ENCODE measurements at regions of chr2 and their contacts with region 1.

Region 1: DNA sequence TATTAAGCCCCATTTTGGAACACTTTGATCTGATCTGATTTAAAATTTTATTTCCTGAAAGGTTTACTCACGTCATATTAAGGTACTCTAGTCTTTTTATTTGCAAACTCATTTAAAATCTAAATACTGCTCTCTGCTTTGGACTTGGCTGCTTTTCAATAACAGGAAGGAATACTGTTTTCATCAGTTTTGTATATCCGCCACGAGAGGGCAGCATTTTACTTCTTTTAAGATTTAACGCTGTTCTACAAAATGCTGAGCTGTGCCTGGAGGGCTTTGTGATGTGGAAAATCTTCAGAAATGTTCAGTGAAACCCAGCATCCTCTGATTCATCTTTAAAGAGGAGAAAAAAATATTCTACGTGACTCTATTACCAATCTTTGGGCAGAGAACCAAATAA is 37.5 kb upstream of the SLC38A11 start:
- DNase-seq: peak; percentile 58
- H3K4me3 Mint-ChIP-seq: no peak overlapping the region
- H3K27ac Mint-ChIP-seq: no peak overlapping the region
- H3K4me1 Mint-ChIP-seq: peaks cover 42% of the 10 kb centered on the region
- H3K27me3 Mint-ChIP-seq: peaks cover 3% of the 10 kb centered on the region

Region 2: DNA sequence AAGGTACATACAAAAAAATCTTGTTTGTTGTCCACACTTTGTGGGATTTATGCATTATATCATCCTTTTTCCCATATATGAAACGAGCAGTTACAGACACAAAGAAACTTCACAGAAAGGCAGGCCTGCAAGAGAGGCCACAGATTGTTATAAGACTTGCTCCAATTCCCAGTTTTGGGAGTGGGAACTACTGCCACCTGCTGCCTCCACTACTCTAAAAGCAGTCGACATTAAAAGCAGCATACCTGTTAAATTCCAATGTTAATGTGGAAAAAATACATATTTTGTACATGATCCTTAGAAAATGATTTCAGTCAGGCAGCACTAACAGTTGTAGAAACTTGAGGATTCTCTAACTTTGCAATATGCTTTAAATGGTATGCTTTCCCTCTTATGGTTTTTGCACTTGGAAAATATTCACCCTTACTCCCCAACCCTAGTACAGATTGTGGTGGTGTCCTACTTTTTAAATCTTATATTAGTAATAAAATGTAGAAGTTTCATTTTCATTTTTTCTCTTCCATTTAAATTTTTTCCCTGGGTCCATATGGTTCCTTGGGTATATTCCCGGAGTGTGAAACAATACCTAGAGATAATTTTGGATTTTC is 75.4 kb before region 1 on chr2:
- CTCF ChIA-PET with region 1: no interaction called
- DNase-seq: no peak
- H3K4me3 Mint-ChIP-seq: no peak overlapping the region
- H3K27ac Mint-ChIP-seq: no peak overlapping the region
- H3K4me1 Mint-ChIP-seq: no peaks in the 10 kb centered on the region
- H3K27me3 Mint-ChIP-seq: no peaks in the 10 kb centered on the region

Region 3: DNA sequence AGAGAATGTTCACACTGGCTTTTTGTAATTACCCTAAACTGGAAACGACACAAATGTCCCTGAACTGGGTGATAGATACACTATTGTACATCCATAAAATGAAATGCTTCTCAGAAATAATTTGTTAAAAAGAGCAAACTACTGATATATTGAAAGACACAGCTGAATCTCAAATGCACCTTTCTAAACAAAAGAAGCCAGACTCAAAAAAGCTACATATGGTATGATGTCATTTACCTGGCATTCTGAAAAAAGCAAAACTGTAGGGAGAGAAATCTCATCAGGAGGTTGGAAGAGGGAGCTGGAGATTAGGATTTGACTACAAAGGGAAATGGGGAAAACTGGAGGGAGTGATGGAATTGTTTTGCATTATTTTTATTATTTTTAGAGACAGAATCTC is 49.5 kb before region 1 on chr2:
- CTCF ChIA-PET with region 1: no interaction called
- DNase-seq: no peak
- H3K4me3 Mint-ChIP-seq: no peak overlapping the region
- H3K27ac Mint-ChIP-seq: no peak overlapping the region
- H3K4me1 Mint-ChIP-seq: no peaks in the 10 kb centered on the region
- H3K27me3 Mint-ChIP-seq: no peaks in the 10 kb centered on the region

Region 4: DNA sequence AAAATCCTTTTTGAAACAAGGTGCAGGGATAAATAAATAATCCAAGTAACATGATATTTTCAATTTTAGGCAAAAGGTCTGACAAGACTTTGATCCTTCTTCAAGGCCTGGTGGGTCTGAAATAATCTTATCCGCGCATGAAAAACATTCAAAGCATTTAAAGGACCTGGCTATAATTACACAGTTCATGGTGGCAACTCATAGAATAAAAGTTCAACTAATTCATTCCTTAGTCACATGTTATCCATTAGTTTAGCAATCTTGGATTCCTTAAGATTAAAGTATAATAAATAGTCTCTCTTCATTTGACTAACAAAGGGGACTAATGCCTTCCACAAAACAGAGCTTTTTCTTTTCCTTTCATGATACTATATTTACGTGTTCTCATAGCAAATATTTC is 16.5 kb before region 1 on chr2:
- CTCF ChIA-PET with region 1: no interaction called
- DNase-seq: no peak
- H3K4me3 Mint-ChIP-seq: no peak overlapping the region
- H3K27ac Mint-ChIP-seq: no peak overlapping the region
- H3K4me1 Mint-ChIP-seq: no peaks in the 10 kb centered on the region
- H3K27me3 Mint-ChIP-seq: no peaks in the 10 kb centered on the region

Region 5: DNA sequence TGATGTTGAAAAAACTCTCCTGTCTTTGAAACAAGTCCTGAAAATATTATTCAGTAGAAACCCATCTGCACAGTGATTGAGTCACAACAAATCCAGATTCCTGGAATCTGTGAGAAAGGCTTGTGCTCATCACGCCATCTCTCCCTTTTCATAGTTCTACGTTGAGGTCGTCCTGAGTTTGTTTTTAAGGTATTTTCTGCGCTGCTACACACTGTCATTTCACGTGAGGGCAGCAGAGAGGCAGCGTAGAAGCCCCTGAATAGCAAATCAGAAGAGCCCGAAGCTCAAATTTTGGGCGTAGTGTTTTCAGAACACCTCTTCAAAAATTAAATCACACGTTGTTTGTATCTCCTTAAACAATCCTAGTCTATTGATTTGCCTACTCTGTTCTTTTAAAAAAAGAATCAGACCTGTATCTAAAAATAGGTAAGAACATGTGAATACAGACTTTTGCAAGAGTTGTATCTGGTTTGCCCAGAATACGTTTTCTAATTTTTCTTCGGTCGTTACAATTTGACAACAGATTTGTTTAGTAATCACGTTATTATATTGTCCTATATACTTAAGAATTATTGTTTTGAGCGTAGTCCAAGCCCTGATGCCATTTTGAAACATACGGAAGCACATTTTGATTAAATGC is 24.1 kb after region 1 on chr2:
- CTCF ChIA-PET with region 1: interaction called, 10 read pairs
- DNase-seq: no peak
- H3K4me3 Mint-ChIP-seq: no peak overlapping the region
- H3K27ac Mint-ChIP-seq: no peak overlapping the region
- H3K4me1 Mint-ChIP-seq: no peaks in the 10 kb centered on the region
- H3K27me3 Mint-ChIP-seq: no peaks in the 10 kb centered on the region

Region 6: DNA sequence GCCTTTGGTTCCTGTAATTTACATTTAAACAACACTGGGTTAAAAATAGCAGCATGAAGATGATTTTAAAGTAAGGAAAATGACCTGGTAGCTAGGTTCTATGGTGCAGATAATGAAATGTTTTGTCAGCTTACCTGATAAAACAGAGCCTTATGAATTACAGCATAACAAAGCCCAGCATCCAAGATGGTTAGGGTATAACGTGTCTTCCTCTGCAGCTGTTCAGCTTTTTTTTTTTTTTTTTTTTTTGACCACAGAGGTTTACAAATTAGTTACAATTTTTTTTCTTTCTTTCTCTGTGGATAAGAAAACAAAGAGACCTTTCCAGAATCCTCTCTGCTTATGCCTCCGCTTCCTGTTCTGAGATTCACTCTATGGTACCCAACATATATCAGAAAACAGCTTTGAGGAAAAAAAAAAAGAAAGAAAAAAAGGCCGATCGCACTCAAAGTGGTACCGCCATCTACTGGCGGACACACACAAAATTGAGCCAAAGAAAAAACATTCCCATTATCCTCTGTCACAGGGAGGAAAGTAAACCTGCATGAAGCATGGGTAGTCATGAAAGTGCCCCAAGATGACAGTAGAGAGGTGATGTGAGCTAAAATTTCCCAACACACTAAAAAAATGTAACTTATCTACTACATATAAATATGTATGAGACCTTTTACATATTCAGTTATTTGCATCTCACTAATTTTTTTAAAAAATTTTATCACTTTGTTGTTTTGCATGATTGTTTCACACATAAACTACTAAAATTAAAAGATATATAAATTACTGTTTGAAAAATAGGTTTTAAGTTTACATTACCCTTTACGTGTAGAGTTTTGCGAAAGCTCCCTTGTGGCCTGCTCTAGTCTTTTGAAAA is 211.1 kb after region 1 on chr2 and contains the start of gene SCN3A:
- CTCF ChIA-PET with region 1: interaction called, 24 read pairs
- DNase-seq: no peak
- H3K4me3 Mint-ChIP-seq: no peak within 1 kb of the TSS
- H3K27ac Mint-ChIP-seq: no peak within 1 kb of the TSS
- H3K4me1 Mint-ChIP-seq: no peaks in the 10 kb centered on the region
- H3K27me3 Mint-ChIP-seq: peaks cover 4% of the 10 kb centered on the region

Region 7: DNA sequence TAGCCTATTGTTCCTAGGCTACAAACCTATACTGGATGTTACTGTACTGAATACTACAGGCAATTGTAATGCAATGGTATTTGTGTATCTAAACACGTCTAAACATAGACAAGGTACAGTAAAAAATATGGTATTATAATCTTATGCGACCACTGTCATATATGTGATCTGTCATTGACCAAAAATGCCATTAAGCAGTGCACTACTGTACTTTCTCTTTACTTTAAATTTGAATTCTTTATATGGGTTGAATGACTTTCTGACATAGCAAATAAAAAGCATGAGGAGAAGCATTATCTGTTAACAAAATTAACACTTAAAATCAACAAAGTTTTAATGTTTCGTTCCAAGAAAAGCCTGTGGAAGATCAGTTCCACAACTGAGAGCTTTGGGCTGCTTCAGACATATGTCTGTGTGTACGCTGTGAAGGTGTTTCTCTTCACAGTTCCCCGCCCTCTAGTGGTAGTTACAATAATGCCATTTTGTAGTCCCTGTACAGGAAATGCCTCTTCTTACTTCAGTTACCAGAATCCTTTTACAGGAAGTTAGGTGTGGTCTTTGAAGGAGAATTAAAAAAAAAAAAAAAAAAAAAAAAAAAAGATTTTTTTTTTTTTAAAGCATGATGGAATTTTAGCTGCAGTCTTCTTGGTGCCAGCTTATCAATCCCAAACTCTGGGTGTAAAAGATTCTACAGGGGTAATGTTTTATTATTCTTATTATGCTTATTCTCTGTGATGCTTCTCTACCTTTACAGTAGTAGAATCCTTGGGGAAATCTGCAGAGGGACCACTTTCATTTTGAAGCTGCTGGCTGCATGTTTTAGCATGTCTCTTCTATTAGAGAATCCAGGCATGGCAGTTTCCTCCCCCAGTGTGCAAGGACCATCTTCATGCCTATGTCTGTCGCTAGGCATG is 300.9 kb after region 1 on chr2:
- CTCF ChIA-PET with region 1: interaction called, 12 read pairs
- DNase-seq: peak; percentile 49
- H3K4me3 Mint-ChIP-seq: no peak overlapping the region
- H3K27ac Mint-ChIP-seq: no peak overlapping the region
- H3K4me1 Mint-ChIP-seq: peaks cover 7% of the 10 kb centered on the region
- H3K27me3 Mint-ChIP-seq: peaks cover 9% of the 10 kb centered on the region

Region 8: GRCh38 chr2:165544897-165545296 is 552.1 kb after region 1 on chr2:
- CTCF ChIA-PET with region 1: no interaction called
- DNase-seq: no peak
- H3K4me3 Mint-ChIP-seq: no peak overlapping the region
- H3K27ac Mint-ChIP-seq: no peak overlapping the region
- H3K4me1 Mint-ChIP-seq: no peaks in the 10 kb centered on the region
- H3K27me3 Mint-ChIP-seq: no peaks in the 10 kb centered on the region